ENCODE measurements at regions of chr10 and their contacts with region 1.

Region 1: GRCh38 chr10:97072851-97073665 is 112.7 kb downstream of the SLIT1 start:
- DNase-seq: peak; percentile 90
- ATAC-seq: peak; percentile 93

Region 2: DNA sequence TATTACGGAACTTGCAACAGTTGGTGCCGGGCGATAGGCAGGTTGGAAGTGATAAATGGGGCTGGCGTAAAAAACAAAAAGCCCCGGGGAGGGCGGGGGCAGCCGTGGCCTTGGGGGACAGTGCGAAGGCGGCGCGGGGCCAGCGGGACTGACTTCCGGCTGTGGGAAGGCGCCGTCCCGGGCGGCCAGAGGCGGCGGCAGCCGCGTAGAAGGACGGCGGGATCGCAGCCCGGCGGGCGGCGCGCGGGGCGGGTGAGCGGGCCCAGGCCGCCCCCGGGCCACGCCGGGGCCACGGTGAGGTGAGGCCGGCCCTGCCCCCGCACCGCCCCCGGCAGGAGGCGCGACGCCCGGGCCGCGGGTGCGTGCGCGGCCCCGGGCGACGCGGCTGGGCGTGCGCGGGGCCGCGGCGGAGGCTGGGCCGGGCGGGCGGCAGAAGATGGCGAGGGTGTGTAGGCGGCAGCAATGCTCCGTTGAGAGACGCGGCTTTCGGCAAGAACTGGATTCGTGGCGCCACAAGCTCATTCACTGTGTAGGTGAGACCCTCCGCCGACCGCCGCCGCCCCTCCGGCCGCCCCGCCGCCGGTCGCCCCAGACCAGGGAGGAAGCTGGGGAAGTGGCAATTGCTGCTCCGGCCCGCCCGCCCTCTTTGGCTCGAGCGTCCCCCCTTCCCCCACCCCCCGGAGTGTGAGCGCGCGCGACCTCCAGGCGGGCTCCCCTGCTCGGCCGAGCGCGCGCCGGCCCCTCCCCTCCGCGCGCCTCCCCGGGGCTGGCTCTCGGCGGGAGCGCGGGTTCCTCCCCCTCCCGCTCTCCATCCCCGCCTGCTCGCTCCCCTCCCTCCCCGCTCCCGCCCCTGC is 241.0 kb before region 1 on chr10 and contains the start of gene LCOR:
- intact Hi-C with region 1: no loop called
- DNase-seq: peak; percentile 90
- ATAC-seq: peak; percentile 91
- total RNA-seq, gene LCOR: 16.9 TPM

Region 3: GRCh38 chr10:97117372-97117771 is 44.3 kb after region 1 on chr10:
- intact Hi-C with region 1: loop called (anchors 2 kb)
- DNase-seq: no peak
- ATAC-seq: peak; percentile 62

Region 4: DNA sequence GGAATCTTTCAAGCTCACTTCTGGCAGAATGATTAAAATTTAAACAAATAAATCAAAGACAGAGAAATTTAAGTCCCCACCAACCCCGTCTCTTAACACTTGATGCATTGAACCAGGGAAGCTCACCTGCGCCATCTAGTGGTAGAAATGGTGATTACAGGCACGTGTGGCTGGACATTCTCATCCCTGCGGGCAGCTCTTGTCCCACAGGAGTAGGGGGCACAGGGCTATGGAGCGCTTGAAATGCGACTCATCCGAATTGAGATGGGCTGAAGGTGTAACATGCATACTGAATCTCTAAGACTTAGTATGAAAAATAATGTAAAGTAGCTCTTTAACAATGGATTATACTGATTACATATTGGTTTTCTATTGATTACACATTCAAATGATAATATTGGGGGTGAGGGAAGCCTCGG is 137.5 kb after region 1 on chr10:
- intact Hi-C with region 1: loop called (anchors 2 kb)
- DNase-seq: peak; percentile 69
- ATAC-seq: peak; percentile 81

Region 5: DNA sequence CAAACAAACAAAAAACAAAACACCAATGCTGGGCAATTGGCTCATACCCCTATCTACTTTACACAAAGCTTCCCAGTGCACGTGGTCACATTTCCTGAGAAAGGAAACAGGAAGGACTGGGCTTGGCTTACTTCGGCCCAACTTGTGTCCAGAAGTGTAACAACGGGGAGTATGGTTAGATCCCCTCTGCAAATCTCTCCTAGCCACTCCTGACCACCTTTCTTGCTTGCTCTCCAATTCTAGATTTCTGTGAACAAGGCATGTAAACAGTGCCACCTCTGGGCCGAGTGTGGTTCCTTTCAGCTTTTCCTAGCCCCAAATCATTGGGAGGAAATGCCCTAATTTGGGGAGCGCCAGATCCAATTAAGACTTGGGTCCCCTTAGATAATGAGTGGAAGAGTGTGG is 282.5 kb after region 1 on chr10:
- intact Hi-C with region 1: no loop called
- DNase-seq: no peak
- ATAC-seq: peak; percentile 51

Region 6: DNA sequence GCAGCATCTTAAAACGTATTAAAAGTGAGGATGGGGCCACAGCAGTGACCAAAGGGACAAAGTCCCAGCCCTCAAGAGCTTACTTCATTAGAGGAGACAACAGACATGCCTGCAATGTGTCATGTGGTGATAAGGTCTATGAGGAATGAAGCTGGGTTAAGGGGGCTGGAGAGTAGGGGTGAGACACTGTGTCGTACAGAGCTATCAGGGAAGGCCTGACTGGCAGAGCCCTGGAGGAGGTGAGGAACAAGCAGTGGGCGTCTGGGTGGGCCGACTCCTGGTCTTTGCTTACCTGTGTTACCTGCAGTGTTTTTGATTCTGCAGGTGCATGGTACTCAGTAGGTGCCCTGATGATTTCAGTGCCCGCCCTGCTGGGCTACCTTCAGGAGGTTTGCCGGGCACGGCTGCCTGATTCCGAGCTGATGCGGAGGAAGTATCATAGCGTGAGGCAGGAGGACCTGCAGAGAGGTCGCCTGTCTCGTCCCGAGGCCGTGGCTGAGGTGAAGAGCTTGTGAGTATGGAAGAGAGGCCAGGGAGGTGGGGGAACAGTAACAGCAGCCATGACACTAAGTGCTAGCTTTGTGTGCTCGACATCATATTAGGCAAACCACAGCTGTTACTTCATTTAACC is 671.5 kb after region 1 on chr10:
- intact Hi-C with region 1: no loop called
- DNase-seq: no peak
- ATAC-seq: no peak

Measured in Right ventricle myocardium superior (tissue), 1 donor.